CD8-positive, alpha-beta memory T cell (primary cell): ENCODE measurements at regions of chr5 and their contacts with region 1.

Region 1: DNA sequence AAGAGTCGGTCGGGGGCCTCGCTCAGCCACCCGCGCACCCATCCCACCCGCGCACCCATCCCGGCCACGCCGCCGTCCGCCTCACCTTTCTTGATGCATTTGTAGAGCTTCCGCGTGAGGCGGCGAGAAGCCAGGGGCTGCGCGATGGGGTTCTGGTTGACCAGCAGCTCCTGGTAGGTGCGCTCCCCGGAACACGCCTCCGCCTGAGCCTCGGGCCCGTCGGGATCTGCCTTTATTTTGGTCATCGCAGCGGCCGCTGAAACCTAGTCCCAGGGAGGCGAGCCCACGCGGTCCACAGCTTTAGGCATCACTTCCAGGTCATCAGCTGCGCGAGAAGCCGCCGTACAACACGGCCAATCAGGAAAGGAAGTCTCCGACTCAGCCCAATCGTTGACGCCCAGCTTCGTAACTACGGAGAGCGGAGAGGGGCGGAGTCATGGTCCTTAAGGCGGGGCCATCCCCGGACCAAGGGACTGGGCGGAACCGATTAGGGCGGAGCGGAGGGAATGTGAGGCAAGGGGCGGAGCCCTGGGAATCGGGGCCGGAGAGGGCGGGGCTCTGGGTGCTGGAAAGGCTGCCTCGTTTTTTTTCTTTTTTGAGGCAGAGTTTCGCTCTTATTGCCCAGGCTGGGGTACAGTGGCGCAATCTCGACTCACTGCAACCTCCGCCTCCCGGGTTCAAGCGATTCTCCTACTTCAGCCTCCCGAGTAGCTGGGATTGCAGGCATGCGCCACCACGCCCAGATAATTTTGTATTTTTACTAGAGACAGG is at the start of gene NHP2:
- DNase-seq: peak; percentile 94 to 97 (median 96)
- H3K4me3 ChIP-seq: peak within 1 kb of the TSS; percentile 80
- H3K4me3 Mint-ChIP-seq: peak within 1 kb of the TSS; percentile 90 to 99 (median 96)
- H3K27ac ChIP-seq: peak within 1 kb of the TSS; percentile 52
- H3K27ac Mint-ChIP-seq: peak within 1 kb of the TSS; percentile 69 to 93 (median 88)
- H3K4me1 ChIP-seq: peaks cover 18% of the 10 kb centered on the region
- H3K4me1 Mint-ChIP-seq: peaks cover 25 to 44% (median 33%) of the 10 kb centered on the region in 3 donors
- H3K27me3 ChIP-seq: no peaks in the 10 kb centered on the region
- H3K27me3 Mint-ChIP-seq: no peaks in the 10 kb centered on the region
- total RNA-seq, gene NHP2: 298 to 311 TPM

Region 2: DNA sequence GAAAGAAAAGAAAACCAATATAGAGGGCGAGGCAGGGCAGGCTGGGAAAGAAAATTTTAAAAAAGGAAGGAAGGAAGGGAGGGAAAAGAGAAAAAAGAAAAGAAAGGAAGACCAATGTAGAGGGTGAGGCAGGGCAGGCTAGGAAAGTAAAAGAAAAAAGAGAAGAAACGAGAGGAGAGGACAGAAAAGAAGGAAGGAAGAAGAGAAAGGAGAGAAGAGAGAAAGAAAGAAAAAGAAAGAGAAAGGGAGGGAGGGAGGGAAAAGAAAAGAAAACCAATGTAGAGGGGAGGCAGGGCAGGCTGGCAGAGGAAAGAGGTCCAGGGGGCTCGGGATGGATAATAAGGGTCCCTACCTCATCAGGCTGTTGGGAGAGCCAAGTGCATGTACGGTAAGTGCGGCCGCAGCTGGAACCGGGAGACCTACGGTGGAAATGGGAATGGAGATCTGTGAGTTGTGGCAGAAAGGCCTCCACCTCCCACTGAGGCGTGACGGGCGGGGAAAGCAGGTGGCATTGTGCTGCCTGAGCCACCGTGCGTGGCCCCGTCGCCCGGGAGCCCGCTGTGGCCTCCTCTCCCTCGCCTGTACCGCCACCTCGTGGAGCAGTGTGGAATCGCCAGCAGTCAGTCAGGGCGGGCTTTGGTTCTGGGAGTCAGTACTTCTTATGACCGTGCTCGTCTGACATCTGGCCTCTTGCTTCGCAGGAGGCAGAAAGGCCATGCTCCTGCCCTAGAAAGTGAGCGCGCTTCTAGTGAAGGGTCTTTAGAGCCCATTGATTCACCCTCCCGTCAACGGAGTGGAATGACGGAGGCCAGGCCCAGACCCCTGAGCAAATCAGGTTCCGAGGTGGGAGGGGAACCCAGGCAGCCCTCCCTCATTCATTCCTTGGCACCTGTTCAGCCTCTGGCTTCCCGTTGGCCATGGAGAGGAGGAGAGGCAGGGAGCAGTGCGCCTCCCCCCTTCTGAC is 10.3 kb after region 1 on chr5:
- CTCF ChIA-PET with region 1: interaction called, 15 read pairs
- POLR2A ChIA-PET with region 1: interaction called, 3 read pairs
- DNase-seq: peak; percentile 81 to 91 (median 89)
- H3K4me3 ChIP-seq: no peak overlapping the region
- H3K4me3 Mint-ChIP-seq: no peak overlapping the region
- H3K27ac ChIP-seq: no peak overlapping the region
- H3K27ac Mint-ChIP-seq: no peak overlapping the region
- H3K4me1 ChIP-seq: peaks cover 7% of the 10 kb centered on the region
- H3K4me1 Mint-ChIP-seq: peaks cover 6 to 8% (median 7%) of the 10 kb centered on the region in 3 donors
- H3K27me3 ChIP-seq: peaks cover 3% of the 10 kb centered on the region
- H3K27me3 Mint-ChIP-seq: peaks cover 17 to 18% of the 10 kb centered on the region in 2 donors

Region 3: DNA sequence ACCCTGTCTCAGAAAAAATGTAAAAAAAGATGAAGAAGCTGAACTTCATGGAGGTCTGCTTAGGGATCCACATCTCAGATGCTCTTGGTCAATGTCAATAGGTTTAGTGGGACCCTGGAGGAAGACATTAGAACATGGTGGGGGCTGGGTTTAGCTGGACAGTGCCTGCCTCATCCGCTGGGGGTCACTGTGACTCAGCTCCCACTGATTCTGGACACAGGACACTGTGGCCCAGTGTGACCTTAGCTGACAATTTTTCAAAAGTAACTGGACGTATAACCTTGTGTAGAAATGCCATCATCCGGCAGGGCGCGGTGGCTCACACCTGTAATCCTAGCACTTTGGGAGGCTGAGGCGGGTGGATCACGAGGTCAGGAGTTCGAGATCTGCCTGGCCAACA is 43.2 kb after region 1 on chr5:
- CTCF ChIA-PET with region 1: no interaction called
- POLR2A ChIA-PET with region 1: no interaction called
- DNase-seq: no peak
- H3K4me3 ChIP-seq: no peak overlapping the region
- H3K4me3 Mint-ChIP-seq: no peak overlapping the region
- H3K27ac ChIP-seq: no peak overlapping the region
- H3K27ac Mint-ChIP-seq: no peak overlapping the region
- H3K4me1 ChIP-seq: peaks cover 18% of the 10 kb centered on the region
- H3K4me1 Mint-ChIP-seq: peaks cover 22 to 27% (median 24%) of the 10 kb centered on the region in 3 donors
- H3K27me3 ChIP-seq: no peaks in the 10 kb centered on the region
- H3K27me3 Mint-ChIP-seq: peaks cover 0 to 2% of the 10 kb centered on the region in 2 donors